ENCODE measurements at regions of chr3 and their contacts with region 1.

Region 1: GRCh38 chr3:115562636-115563267 is 60.6 kb upstream of the GAP43 start:
- DNase-seq: no peak
- H3K4me3 ChIP-seq: no peak overlapping the region
- H3K27ac ChIP-seq: no peak overlapping the region
- H3K4me1 ChIP-seq: no peaks in the 10 kb centered on the region
- H3K27me3 ChIP-seq: no peaks in the 10 kb centered on the region
- CTCF ChIP-seq: no peak
- POLR2A ChIP-seq: no peak

Region 2: GRCh38 chr3:116614795-116615362 is 1052.1 kb after region 1 on chr3:
- intact Hi-C with region 1: loop called (anchors 10 kb)
- DNase-seq: no peak
- H3K4me3 ChIP-seq: no peak overlapping the region
- H3K27ac ChIP-seq: no peak overlapping the region
- H3K4me1 ChIP-seq: no peaks in the 10 kb centered on the region
- H3K27me3 ChIP-seq: no peaks in the 10 kb centered on the region
- CTCF ChIP-seq: no peak
- POLR2A ChIP-seq: no peak

Measured in breast epithelium (tissue), 4 donors.